Activated B cell treated with CpG ODN at 0.5 μM for 24 hours (primary cell): ENCODE measurements at regions of chr14 and their contacts with region 1.

Region 1: GRCh38 chr14:49971156-49972130 is 78.6 kb downstream of the ARF6 start:
- DNase-seq: no peak
- ATAC-seq: peak; percentile 90
- H3K4me3 Mint-ChIP-seq: peak overlapping the region; percentile 44
- H3K27ac Mint-ChIP-seq: peak overlapping the region; percentile 96
- H3K4me1 Mint-ChIP-seq: peaks cover 70% of the 10 kb centered on the region
- H3K27me3 Mint-ChIP-seq: no peaks in the 10 kb centered on the region
- CTCF ChIP-seq: no peak

Region 2: GRCh38 chr14:49633640-49634546 is 337.6 kb before region 1 on chr14:
- CTCF ChIA-PET with region 1: no interaction called
- POLR2A ChIA-PET with region 1: no interaction called
- intact Hi-C with region 1: no loop called
- DNase-seq: peak; percentile 92
- ATAC-seq: peak; percentile 80
- H3K4me3 Mint-ChIP-seq: peak overlapping the region; percentile 96
- H3K27ac Mint-ChIP-seq: peak overlapping the region; percentile 98
- H3K4me1 Mint-ChIP-seq: peaks cover 66% of the 10 kb centered on the region
- H3K27me3 Mint-ChIP-seq: no peaks in the 10 kb centered on the region
- CTCF ChIP-seq: no peak

Region 3: GRCh38 chr14:49867831-49868723 is 103.4 kb before region 1 on chr14:
- CTCF ChIA-PET with region 1: interaction called, 15 read pairs
- POLR2A ChIA-PET with region 1: interaction called, 233 read pairs
- intact Hi-C with region 1: loop called (anchors 1 kb)
- DNase-seq: peak; percentile 85
- ATAC-seq: peak; percentile 84
- H3K4me3 Mint-ChIP-seq: peak overlapping the region; percentile 95
- H3K27ac Mint-ChIP-seq: peak overlapping the region; percentile 100
- H3K4me1 Mint-ChIP-seq: peaks cover 44% of the 10 kb centered on the region
- H3K27me3 Mint-ChIP-seq: no peaks in the 10 kb centered on the region
- CTCF ChIP-seq: no peak

Region 4: GRCh38 chr14:49920935-49921334 is 50.5 kb before region 1 on chr14:
- CTCF ChIA-PET with region 1: no interaction called
- POLR2A ChIA-PET with region 1: interaction called, 4 read pairs
- intact Hi-C with region 1: loop called (anchors 1 kb)
- DNase-seq: no peak
- ATAC-seq: peak; percentile 77
- H3K4me3 Mint-ChIP-seq: peak overlapping the region; percentile 58
- H3K27ac Mint-ChIP-seq: peak overlapping the region; percentile 76
- H3K4me1 Mint-ChIP-seq: peaks cover 43% of the 10 kb centered on the region
- H3K27me3 Mint-ChIP-seq: no peaks in the 10 kb centered on the region
- CTCF ChIP-seq: no peak

Region 5: GRCh38 chr14:49959822-49960408 is 11.5 kb before region 1 on chr14:
- CTCF ChIA-PET with region 1: interaction called, 19 read pairs
- POLR2A ChIA-PET with region 1: interaction called, 110 read pairs
- intact Hi-C with region 1: loop called (anchors 1 kb)
- DNase-seq: no peak
- ATAC-seq: peak; percentile 59
- H3K4me3 Mint-ChIP-seq: peak overlapping the region; percentile 71
- H3K27ac Mint-ChIP-seq: peak overlapping the region; percentile 96
- H3K4me1 Mint-ChIP-seq: peaks cover 67% of the 10 kb centered on the region
- H3K27me3 Mint-ChIP-seq: no peaks in the 10 kb centered on the region
- CTCF ChIP-seq: no peak

Region 6: DNA sequence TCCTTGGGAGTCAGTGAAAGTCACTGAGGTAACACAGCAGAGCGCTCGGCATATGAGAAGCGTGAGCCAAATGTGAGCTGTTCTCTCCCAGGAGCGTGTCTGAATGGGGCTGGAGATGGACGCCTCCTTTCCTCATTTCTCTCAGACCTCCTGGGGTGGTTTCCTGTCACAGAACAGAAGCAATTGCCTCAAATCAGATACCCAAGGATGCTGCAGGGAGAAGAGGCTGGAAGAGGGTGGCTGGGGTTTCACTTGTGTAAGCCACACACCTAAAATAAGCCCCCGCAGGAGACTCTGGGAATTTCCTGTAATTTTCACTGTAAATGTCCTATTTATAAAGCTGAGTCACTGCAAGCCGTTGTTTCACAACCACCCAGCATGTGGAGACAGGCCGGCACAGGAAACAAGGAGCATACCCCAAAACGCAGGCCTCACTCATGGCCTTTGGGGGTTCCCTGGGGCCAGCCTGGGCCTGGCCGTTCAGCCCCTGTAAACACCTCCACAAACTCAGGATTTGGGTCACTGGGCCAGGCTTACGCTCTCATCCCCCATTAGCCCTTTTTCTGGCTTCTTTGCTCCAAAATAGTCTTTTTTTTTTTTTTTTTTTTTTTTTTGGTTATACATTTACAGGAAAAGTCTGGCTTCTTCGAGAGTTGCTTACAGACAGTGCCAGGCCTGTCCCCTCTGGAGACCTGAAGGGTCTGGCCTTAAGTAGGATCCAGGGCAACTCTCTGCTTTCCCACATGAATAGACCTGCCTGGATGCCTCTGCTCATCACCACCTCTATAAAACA is 89.6 kb after region 1 on chr14:
- CTCF ChIA-PET with region 1: interaction called, 13 read pairs
- POLR2A ChIA-PET with region 1: interaction called, 52 read pairs
- intact Hi-C with region 1: loop called (anchors 1 kb)
- DNase-seq: no peak
- ATAC-seq: peak; percentile 0
- H3K4me3 Mint-ChIP-seq: peak overlapping the region; percentile 87
- H3K27ac Mint-ChIP-seq: peak overlapping the region; percentile 100
- H3K4me1 Mint-ChIP-seq: peaks cover 88% of the 10 kb centered on the region
- H3K27me3 Mint-ChIP-seq: no peaks in the 10 kb centered on the region
- CTCF ChIP-seq: no peak

Region 7: DNA sequence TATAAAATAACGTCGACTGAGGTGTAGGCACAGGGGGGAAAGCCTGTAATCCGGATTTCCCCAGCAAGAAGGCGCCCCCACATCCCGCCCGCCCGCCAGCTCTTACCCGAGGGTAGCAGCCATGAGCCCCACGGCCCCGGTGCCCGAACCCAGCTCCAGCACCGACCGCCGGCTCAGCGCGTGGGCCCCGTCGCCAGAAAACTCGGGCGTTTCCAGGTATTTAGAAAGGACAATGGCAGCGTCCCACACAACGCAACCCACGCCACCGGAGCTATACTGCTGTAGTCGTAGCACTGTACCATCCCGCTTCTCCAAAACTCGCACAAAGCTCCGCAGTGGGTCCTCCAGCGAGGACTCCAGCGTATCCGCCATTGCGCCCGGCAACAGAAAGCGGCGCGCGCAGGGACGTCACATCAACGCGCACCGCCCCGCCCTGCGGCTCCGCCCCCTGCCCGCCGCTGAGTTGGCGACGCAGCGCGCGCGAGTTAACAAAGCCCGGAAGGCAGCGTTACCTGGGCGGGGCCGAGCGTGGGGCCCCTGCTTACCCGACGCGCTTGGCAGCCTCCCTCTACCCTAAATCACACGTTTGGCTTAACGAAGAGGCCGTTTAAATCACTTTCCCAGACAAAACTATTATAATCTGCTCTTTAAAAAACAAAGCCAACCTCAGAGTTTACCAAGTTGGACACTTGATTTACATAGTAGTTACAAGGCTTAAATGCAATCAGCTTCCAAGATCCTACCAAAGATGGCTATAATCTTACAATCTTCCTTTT is 144.9 kb after region 1 on chr14 and contains the start of gene VCPKMT:
- CTCF ChIA-PET with region 1: no interaction called
- POLR2A ChIA-PET with region 1: interaction called, 14 read pairs
- intact Hi-C with region 1: no loop called
- DNase-seq: peak; percentile 97
- ATAC-seq: peak; percentile 96
- H3K4me3 Mint-ChIP-seq: peak within 1 kb of the TSS; percentile 95
- H3K27ac Mint-ChIP-seq: peak within 1 kb of the TSS; percentile 97
- H3K4me1 Mint-ChIP-seq: peaks cover 51% of the 10 kb centered on the region
- H3K27me3 Mint-ChIP-seq: no peaks in the 10 kb centered on the region
- CTCF ChIP-seq: no peak
- total RNA-seq, gene VCPKMT: 19.9 and 20.8 TPM in 2 replicates

Region 8: DNA sequence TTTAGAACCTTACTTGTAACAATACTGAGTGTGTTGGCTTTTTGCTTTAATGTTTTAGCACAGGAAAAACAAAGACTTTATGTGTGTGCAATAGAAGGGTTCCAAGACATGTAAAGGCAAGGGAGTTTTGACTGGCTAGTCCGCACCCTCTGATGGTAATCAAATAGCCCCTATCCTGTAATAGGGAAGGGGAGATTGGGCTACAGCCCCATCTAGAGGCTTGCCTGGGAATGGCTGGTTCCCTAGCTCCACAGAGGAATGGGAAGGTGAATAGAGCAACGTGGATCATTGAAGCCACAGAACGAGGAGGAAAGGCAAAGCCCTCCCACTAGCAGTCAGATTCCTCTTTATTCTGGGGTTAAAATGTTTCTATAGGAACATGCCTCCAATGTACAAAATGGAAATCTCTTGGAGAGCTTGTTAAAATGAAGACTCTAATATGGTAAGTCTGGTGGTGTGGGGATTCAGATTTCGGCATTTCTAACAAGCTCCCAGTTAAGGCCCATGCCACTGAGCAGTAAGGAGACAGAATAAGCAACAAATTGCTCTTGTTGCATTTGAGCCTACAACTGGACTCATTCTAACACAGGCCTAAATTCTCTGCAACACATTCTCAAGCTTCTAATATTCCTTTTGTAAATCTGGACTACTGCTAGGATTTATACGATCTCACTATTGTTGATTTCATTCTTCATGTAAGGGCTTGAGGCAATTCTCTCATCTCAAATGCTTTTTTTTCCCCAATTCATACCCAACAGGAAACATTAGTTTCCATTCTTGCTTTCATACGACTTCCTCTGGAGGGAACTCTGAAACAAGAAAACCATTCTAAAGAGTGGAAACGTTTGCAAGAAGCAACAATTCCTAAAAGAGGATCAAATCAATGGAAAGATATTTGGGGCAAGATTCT is 802.4 kb after region 1 on chr14:
- CTCF ChIA-PET with region 1: no interaction called
- POLR2A ChIA-PET with region 1: no interaction called
- intact Hi-C with region 1: no loop called
- DNase-seq: no peak
- ATAC-seq: peak; percentile 67
- H3K4me3 Mint-ChIP-seq: no peak overlapping the region
- H3K27ac Mint-ChIP-seq: no peak overlapping the region
- H3K4me1 Mint-ChIP-seq: peaks cover 17% of the 10 kb centered on the region
- H3K27me3 Mint-ChIP-seq: no peaks in the 10 kb centered on the region
- CTCF ChIP-seq: no peak

Region 9: DNA sequence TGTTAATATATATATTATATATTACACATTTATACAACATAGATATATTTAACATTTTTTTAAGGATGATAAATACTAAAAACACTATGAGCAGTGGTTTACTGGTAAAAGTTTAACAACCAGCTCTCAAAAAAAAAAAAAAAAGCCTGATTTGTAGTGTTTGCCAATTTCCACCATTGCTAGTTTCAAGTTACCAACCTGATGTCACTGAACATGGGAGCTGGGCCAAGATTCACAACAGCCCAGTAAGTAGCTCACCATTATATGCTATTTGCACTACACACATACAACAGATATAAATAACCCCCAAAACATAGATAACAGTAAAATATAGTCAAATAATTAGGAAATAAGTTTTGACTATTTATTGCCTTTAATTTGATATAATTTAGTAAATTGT is 1239.7 kb after region 1 on chr14:
- CTCF ChIA-PET with region 1: no interaction called
- POLR2A ChIA-PET with region 1: no interaction called
- intact Hi-C with region 1: no loop called
- DNase-seq: no peak
- ATAC-seq: no peak
- H3K4me3 Mint-ChIP-seq: no peak overlapping the region
- H3K27ac Mint-ChIP-seq: no peak overlapping the region
- H3K4me1 Mint-ChIP-seq: no peaks in the 10 kb centered on the region
- H3K27me3 Mint-ChIP-seq: peaks cover 10% of the 10 kb centered on the region
- CTCF ChIP-seq: no peak

Region 10: GRCh38 chr14:51901475-51902024 is 1930.1 kb after region 1 on chr14:
- CTCF ChIA-PET with region 1: no interaction called
- POLR2A ChIA-PET with region 1: no interaction called
- intact Hi-C with region 1: no loop called
- DNase-seq: no peak
- ATAC-seq: no peak
- H3K4me3 Mint-ChIP-seq: no peak overlapping the region
- H3K27ac Mint-ChIP-seq: peak overlapping the region; percentile 5
- H3K4me1 Mint-ChIP-seq: peaks cover 49% of the 10 kb centered on the region
- H3K27me3 Mint-ChIP-seq: no peaks in the 10 kb centered on the region
- CTCF ChIP-seq: no peak